AG04449 (cell line): ENCODE measurements at regions of chr2 and their contacts with region 1.

Region 1: DNA sequence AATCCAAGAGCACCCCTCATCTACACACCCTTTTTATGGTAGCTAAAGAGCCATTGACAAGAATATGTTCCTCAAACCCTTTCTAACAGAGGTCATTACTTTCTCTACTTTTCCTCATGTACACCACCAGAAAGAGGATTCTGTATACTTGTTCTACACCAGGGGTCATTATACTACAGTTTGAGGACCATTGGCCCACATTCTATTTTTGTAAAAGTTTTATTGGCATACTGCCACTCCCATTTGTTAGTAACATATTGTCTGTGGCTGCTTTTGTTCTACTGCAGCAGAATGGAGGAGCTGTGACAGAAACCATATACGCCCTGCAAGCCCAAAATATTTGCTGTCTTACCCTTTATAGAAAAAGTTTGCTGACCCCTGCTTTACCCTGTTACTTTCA is 14.3 kb downstream of the HTR2B start:
- DNase-seq: no peak
- H3K4me3 ChIP-seq: no peak overlapping the region
- CTCF ChIP-seq: no peak

Region 2: DNA sequence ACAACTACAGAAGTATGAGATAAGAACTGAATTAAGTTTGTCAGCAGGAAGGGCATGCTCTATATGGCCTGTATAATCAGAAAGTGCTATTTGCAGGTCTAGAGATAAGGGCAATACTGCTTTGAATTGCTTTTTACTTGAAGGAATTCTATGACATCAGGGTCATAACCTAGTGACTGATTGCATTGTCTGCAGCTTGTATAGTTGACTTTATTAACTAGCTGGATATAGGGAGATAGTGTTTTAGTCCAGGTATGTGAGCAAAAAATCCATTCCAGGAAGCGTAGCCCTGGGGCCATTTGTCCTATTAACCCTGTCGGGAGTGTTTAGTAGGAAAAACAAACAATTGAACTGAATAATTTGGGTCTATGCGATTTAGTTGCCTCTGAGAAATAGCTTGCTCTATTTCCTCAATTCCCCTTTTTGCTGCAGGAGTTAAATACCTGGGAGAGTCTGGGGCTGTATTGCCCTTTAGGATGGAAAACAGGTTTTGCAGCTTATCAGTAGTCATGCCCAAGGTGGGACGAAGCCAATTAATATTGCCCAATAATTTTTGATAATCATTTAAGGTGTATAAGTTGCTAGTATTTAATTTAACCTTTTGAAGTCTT is 15.7 kb before region 1 on chr2:
- CTCF ChIA-PET with region 1: no interaction called
- POLR2A ChIA-PET with region 1: no interaction called
- DNase-seq: no peak
- H3K4me3 ChIP-seq: no peak overlapping the region
- CTCF ChIP-seq: no peak

Region 3: DNA sequence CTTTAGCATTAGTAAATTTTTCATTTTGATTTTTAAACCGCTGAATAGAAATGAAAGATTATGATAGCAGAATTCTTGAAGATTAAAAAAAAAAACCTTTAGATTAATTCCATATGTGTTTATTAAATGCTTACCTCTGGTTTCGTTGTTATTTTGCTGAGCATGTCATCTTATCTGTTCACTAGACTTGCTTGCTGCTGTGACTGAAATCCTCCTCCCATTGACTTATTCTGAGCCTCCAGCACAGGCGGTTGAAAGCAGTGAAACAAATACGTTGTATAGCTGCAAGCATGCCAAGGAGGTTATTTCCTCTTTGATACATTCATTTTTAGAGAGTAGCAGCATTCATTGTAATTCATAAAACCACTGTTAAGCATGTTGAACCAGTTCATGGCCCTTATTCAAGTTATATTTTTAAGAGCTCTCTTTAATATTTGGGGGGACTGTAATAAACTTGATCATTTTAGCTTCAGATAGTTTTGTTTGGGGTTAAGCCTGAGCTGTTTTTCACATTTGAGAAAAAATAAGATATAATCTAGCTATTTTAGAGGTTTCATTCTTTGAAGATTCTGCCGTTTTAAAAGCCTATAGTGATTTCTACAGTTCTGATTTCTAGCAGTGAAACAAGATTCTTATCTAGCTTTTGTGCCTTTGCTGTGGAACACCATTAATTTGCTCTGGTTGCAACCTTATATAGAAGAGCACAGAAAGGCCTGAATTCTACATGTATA is 14.5 kb after region 1 on chr2 and contains the start of gene HTR2B:
- CTCF ChIA-PET with region 1: interaction called, 13 read pairs
- POLR2A ChIA-PET with region 1: no interaction called
- DNase-seq: no peak
- H3K4me3 ChIP-seq: no peak within 1 kb of the TSS
- CTCF ChIP-seq: no peak